Activated CD4-positive, alpha-beta memory T cell treated with anti-CD3 and anti-CD28 coated beads for 36 hours (primary cell): ENCODE measurements at regions of chr11 and their contacts with region 1.

Region 1: GRCh38 chr11:46800177-46800576 is 45.9 kb downstream of the CKAP5 start:
- DNase-seq: no peak
- H3K4me3 Mint-ChIP-seq: no peak overlapping the region
- H3K27ac Mint-ChIP-seq: no peak overlapping the region
- H3K4me1 Mint-ChIP-seq: no peaks in the 10 kb centered on the region
- H3K27me3 Mint-ChIP-seq: no peaks in the 10 kb centered on the region

Region 2: GRCh38 chr11:46760429-46761128 is 39.6 kb before region 1 on chr11:
- CTCF ChIA-PET with region 1: no interaction called
- POLR2A ChIA-PET with region 1: no interaction called
- intact Hi-C with region 1: loop called (anchors 5 kb)
- DNase-seq: no peak
- H3K4me3 Mint-ChIP-seq: no peak overlapping the region
- H3K27ac Mint-ChIP-seq: no peak overlapping the region
- H3K4me1 Mint-ChIP-seq: no peaks in the 10 kb centered on the region
- H3K27me3 Mint-ChIP-seq: no peaks in the 10 kb centered on the region